ENCODE measurements at regions of chr4 and their contacts with region 1.

Region 1: GRCh38 chr4:87150498-87151261 is 69.7 kb downstream of the KLHL8 start:
- DNase-seq: peak; percentile 67
- H3K4me3 Mint-ChIP-seq: no peak overlapping the region
- H3K27ac Mint-ChIP-seq: no peak overlapping the region
- H3K4me1 Mint-ChIP-seq: no peaks in the 10 kb centered on the region
- H3K27me3 Mint-ChIP-seq: no peaks in the 10 kb centered on the region

Region 2: DNA sequence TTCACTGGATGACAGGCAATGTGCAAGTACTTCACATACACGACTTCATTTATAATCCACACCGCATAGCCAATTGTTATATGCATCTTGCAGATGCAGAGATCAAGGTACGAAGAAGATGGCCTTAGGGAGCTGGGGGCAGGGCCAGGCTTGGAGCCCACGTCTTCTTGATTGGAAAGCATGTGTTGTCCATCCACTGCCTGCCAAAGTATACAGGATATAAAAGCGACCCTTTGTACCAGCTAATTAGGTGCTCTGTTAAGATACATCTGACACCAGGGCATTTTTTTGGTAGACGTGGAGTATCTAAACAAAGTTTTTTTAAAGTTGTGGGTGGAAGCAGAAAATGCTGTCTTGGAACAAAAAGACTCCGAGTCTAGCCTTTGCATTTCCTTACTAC is 259.9 kb before region 1 on chr4:
- CTCF ChIA-PET with region 1: no interaction called
- intact Hi-C with region 1: no loop called
- DNase-seq: no peak
- H3K4me3 Mint-ChIP-seq: no peak overlapping the region
- H3K27ac Mint-ChIP-seq: no peak overlapping the region
- H3K4me1 Mint-ChIP-seq: peaks cover 5% of the 10 kb centered on the region
- H3K27me3 Mint-ChIP-seq: peaks cover 22% of the 10 kb centered on the region

Region 3: DNA sequence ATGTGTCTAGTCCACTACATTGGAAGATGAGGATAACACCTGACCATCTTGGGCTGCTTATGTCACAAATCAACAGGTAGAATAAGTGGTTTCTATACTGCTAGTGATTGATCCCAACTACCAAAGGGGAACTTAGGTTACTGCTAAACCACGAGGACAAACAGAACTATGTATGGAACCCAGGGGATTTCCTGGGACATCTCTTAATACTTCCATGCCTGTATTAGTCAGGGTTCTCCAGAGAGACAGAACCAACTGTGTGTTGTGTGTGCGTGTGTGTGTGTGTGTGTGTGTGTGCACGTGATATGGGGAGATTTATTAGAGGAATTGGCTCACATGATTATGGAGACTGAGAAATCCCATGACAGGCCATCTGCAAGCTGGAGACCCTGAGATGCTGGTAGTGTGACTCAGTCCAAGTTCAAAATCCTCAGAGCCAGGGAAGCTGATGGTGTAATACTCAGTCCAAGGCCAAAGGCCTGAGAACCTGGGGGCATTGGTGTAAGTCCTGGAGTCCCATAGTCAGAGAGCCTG is 232.1 kb before region 1 on chr4:
- CTCF ChIA-PET with region 1: interaction called, 29 read pairs
- intact Hi-C with region 1: loop called (anchors 1 kb)
- DNase-seq: no peak
- H3K4me3 Mint-ChIP-seq: no peak overlapping the region
- H3K27ac Mint-ChIP-seq: no peak overlapping the region
- H3K4me1 Mint-ChIP-seq: no peaks in the 10 kb centered on the region
- H3K27me3 Mint-ChIP-seq: no peaks in the 10 kb centered on the region

Region 4: GRCh38 chr4:87220094-87220822 is 69.6 kb after region 1 on chr4 and contains the start of gene KLHL8:
- CTCF ChIA-PET with region 1: interaction called, 10 read pairs
- intact Hi-C with region 1: loop called (anchors 1 kb)
- DNase-seq: peak; percentile 85
- H3K4me3 Mint-ChIP-seq: peak within 1 kb of the TSS; percentile 84
- H3K27ac Mint-ChIP-seq: peak within 1 kb of the TSS; percentile 82
- H3K4me1 Mint-ChIP-seq: peaks cover 16% of the 10 kb centered on the region
- H3K27me3 Mint-ChIP-seq: no peaks in the 10 kb centered on the region
- total RNA-seq, gene KLHL8: 10.7 to 12.1 TPM

Region 5: GRCh38 chr4:87240341-87240740 is 89.7 kb after region 1 on chr4:
- CTCF ChIA-PET with region 1: interaction called, 28 read pairs
- intact Hi-C with region 1: loop called (anchors 1 kb)
- DNase-seq: no peak
- H3K4me3 Mint-ChIP-seq: no peak overlapping the region
- H3K27ac Mint-ChIP-seq: no peak overlapping the region
- H3K4me1 Mint-ChIP-seq: no peaks in the 10 kb centered on the region
- H3K27me3 Mint-ChIP-seq: peaks cover 7% of the 10 kb centered on the region

Region 6: DNA sequence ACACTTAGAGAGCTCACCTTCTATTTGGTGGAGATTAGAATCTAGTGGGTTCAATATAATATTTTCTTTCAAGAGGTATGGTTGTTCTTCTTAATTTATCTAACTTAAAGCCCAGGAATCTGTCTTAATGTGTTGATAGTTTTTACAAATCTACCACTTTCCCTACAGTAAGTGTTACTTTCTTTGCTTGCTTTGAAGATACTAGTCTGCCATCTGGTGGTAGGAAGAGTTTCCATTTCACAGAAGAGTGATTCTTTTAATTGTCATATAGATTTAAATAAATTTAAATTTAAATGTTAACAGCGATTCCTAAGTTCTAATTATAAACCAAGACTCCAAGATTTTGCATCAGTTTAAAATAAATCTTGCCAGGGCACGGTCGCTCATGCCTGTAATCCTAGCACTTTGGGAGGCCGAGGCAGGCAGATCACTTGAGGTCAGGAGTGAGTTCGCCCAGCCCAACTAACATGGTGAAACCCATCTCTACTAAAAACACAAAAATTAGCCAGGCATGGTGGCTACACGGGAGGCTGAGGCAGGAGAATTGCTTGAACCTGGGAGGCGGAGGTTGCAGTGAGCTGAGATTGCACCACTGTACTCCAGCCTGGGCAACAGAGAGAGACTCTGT is 315.2 kb after region 1 on chr4:
- CTCF ChIA-PET with region 1: interaction called, 8 read pairs
- intact Hi-C with region 1: loop called (anchors 1 kb)
- DNase-seq: no peak
- H3K4me3 Mint-ChIP-seq: no peak overlapping the region
- H3K27ac Mint-ChIP-seq: no peak overlapping the region
- H3K4me1 Mint-ChIP-seq: no peaks in the 10 kb centered on the region
- H3K27me3 Mint-ChIP-seq: no peaks in the 10 kb centered on the region

Measured in activated naive CD4-positive, alpha-beta T cell treated with anti-CD3 and anti-CD28 coated beads for 36 hours (primary cell).